ENCODE measurements at regions of chr13 and their contacts with region 1.

Region 1: DNA sequence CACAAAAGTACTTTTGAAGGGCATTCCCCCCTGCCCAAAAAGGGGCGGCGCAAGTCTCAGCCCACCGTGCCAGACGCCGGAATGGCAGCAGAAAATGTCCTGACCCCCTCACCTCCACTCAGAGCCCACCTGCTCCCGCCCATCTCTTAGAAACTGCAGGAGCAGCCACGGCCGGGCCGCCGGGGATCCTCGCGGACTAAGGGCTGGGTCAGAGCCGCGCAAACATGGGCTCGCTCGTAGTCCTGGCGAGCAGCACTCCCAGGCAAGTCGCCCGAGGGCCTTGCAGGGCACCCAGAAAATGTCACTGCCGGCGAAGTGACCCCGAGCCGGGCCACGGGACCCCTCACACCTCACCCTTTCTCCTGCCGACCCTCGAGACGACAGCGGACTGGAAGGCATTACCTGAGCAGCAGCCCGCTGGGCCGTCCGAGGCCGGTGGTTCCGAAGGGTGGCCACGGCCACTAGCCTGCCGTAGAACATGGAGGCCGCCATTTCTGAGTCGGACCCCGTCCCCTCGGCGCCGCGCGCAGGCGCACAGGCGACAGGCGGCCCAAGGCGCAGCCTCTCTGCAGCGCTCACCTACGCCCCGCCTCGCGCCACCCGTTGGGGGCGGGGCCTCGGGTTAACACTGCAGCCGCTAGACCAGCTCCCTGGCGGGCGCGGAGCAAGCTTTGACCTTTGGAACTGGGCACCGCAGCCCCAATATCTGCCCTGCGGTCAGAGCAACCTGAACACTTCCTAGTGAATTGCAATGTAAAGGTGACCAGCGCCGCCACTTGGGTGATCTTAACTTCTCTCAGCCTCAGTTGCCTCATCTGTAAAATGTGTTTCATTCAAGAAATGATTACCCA is at the start of gene SUCLA2:
- DNase-seq: peak; percentile 94
- H3K4me3 ChIP-seq: peak within 1 kb of the TSS; percentile 80 to 100 (median 92)
- H3K27ac ChIP-seq: peak within 1 kb of the TSS; percentile 82 to 89 (median 85)
- H3K4me1 ChIP-seq: peaks cover 30 to 47% (median 45%) of the 10 kb centered on the region in 4 donors
- H3K27me3 ChIP-seq: no peaks in the 10 kb centered on the region
- CTCF ChIP-seq: peak in 2 of 3 experiments; percentile 6 to 13
- EP300 ChIP-seq: no peak
- POLR2A ChIP-seq: no peak
- total RNA-seq, gene SUCLA2: 42.1 to 62.7 (median 50.0) TPM

Region 2: DNA sequence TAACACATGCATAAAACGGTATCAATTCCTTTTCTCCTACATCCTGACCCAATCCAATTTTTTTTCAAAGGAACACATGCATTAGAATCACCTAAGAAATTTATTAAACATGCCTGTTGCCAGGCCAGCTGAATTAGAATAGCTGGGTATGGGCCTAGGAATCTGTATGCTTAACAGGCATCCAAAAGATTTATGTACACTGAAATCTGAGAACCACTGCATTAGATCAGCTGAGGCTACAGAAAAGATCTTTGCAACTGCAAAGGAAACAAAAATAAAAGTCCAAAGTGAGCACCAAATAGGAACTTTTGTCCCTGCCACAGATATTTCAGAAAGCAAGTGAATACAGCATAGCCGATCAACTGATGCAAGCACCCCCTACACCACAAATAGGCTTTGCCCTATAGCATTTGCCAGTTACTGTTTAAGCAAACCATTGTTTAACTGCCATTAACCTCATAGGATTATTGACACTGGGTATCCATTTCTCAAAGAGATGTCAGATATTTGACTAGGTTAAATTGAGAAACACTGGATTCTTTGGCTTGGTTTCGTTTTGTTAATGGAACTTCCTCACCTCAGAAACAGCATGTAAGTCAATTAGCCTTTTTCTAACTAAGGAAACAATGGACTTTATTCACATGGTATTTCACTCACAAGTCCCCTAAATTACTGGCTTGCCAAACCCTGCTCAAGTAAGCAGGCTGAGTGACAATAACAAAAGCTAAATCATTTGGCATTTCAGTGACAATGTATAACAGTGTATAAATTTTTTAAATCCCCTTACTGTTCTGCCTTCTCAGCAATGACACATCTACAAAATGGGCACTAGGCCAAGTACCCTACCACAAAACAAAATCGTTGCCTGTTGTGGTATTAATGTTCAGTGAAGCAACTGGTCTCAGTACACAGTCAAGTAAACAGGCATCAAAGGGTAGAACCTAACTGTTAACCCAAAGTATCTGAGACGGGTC is 67.8 kb before region 1 on chr13:
- intact Hi-C with region 1: no loop called
- DNase-seq: no peak
- H3K4me3 ChIP-seq: no peak overlapping the region
- H3K27ac ChIP-seq: no peak overlapping the region
- H3K4me1 ChIP-seq: peaks cover 0 to 5% (median 0%) of the 10 kb centered on the region in 4 donors
- H3K27me3 ChIP-seq: no peaks in the 10 kb centered on the region
- CTCF ChIP-seq: no peak
- EP300 ChIP-seq: no peak
- POLR2A ChIP-seq: no peak

Region 3: DNA sequence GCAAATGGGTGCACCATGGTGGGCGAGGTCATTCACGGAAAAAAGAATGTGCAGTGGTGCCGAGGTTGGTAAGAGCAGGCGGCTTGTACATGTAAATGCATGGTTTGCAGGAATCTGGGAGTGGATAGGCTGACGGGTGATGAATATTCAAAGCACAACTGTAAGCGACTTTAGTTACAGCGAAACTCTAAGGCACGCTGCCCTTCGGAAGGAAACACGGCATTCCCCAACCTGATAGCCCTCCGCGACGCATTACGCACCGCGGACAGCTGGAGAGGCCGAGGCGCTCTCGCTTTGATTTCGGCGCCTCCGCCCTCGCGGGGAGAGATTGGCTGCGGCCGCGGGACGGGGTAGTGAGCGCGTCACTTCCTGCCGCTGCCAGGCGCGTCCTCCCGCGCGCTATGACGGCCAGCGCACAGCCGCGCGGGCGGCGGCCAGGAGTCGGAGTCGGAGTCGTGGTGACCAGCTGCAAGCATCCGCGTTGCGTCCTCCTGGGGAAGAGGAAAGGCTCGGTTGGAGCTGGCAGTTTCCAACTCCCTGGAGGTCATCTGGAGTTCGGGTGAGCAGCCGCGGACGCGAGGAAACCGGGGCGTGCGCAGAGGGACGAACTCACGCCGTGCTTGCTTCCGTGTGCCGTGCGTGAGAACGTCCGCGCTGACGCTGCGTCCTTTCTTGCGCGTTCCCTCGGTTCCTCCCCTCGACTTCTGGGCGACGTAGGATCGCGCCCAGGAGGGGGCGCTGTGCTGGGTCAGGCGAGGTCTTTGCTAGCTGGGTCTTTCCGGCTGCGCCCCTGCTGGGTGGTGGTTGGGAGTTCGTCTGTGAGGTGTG is 36.6 kb after region 1 on chr13 and contains the start of gene NUDT15:
- intact Hi-C with region 1: loop called (anchors 5 kb)
- DNase-seq: peak; percentile 98
- H3K4me3 ChIP-seq: peak within 1 kb of the TSS; percentile 74 to 90 (median 78)
- H3K27ac ChIP-seq: peak within 1 kb of the TSS; percentile 94 to 97 (median 96)
- H3K4me1 ChIP-seq: peaks cover 8 to 20% (median 18%) of the 10 kb centered on the region in 4 donors
- H3K27me3 ChIP-seq: no peaks in the 10 kb centered on the region
- CTCF ChIP-seq: peak; percentile 90 to 97 (median 93)
- EP300 ChIP-seq: peak; percentile 89
- POLR2A ChIP-seq: peak; percentile 67
- total RNA-seq, gene NUDT15: 5.0 to 8.0 (median 5.9) TPM